Dorsolateral prefrontal cortex (tissue), 120 donors: ENCODE measurements at regions of chr14 and their contacts with region 1.

Region 1: DNA sequence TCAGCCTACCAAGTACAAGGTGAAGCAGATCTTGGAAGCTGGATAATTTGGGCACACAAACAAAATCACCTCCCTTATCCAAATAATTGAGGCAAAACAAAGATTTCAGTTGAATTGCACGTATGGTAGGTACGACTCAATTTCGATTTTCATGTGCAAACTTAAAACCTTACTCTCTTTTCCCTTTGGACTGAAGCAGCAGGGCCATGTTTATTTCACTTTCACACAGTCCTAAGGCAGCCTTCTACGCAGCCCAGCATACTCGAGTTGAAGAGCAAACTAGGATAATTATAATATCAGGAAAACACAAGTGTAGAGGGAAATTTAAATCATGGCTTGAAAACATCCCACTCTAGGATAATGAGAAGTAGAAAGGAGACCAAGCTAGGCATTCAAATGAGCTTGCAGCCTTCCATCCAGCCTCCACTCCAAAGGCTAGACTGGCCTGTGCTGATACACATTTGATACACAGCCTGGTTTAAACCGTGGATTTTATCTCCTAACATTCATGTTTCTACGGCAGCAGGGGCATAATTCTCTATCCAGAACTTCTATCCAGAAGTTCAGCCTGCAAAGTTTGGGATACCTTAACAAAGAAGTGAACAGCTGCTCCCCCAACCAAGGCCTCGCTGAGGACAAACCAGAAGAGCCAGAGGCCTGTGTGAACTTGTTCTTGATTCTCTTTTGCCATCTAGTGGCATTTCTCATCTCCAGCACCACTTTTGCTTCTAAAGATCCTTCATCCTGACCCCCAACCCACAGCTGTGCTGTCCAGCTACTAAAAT is 2.4 kb upstream of the RNASE7 start:
- DNase-seq: peak in 3 of 10 donors; percentile 24 to 68 (median 56)
- H3K4me3 ChIP-seq: peak overlapping the region in 31 of 59 donors; percentile 0 to 51 (median 25)
- H3K27ac ChIP-seq: peak overlapping the region; percentile 31 to 98 (median 92)
- H3K27me3 ChIP-seq: peaks cover 0 to 6% (median 0%) of the 10 kb centered on the region in 45 donors
- CTCF ChIP-seq: peak; percentile 27 to 92 (median 79)

Region 2: GRCh38 chr14:21024585-21025370 is 15.0 kb before region 1 on chr14 and contains the start of gene NDRG2:
- intact Hi-C with region 1: loop called (anchors 1 kb)
- DNase-seq: peak; percentile 23 to 80 (median 68)
- H3K4me3 ChIP-seq: peak within 1 kb of the TSS; percentile 67 to 95 (median 82)
- H3K27ac ChIP-seq: peak within 1 kb of the TSS; percentile 76 to 100 (median 99)
- H3K27me3 ChIP-seq: peaks cover 0 to 30% (median 0%) of the 10 kb centered on the region in 45 donors
- CTCF ChIP-seq: peak in 7 of 56 donors; percentile 6 to 36 (median 17)
- total RNA-seq, gene NDRG2: 513 to 2,446 (median 961) TPM

Region 3: DNA sequence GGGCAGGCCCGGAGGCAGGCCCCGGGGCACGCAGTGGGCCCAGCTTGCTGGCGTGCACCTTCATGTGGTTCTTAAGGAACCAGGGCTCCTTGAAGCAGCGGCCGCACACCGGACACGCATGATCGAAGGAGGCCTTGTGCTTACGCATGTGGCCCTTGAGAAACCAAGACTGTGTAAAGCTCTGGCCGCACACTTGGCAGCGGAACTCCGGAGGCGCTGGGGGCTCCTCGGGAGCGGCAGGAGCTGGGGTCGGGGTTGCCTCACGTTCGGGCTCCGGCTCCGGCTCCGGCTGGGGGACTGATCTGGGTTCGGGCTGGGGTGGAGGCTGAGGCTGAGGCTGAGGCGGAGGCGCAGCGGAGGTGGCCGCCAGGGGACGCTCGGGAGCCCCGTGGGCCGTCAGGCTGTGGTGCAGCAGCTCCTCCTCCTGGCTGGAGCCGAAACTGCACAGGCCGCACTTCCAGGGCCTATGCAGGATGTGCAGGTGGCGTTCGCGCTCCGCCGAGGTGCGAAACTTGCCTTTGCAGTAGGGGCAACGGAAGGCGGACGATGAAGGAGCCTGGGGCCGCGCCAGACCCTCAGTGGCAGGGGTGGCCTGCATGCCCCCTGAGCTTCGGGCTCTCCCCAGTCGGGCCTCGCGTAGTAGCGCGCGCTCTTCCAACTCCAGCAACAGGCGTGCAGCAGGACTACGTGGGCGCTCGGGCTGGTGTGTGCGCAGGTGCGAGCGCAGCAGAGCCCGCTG is 52.7 kb after region 1 on chr14:
- intact Hi-C with region 1: loop called in 1 of 2 experiments (anchors 2 kb)
- DNase-seq: peak; percentile 65 to 83 (median 75)
- H3K4me3 ChIP-seq: peak overlapping the region in 19 of 59 donors; percentile 0 to 36 (median 17)
- H3K27ac ChIP-seq: peak overlapping the region in 41 of 59 donors; percentile 2 to 81 (median 34)
- H3K27me3 ChIP-seq: no peaks in the 10 kb centered on the region
- CTCF ChIP-seq: peak; percentile 65 to 100 (median 100)

Region 4: GRCh38 chr14:21121106-21121505 is 81.3 kb after region 1 on chr14:
- intact Hi-C with region 1: no loop called
- DNase-seq: no peak
- H3K4me3 ChIP-seq: no peak overlapping the region
- H3K27ac ChIP-seq: no peak overlapping the region
- H3K27me3 ChIP-seq: peaks cover 0 to 14% (median 0%) of the 10 kb centered on the region in 45 donors
- CTCF ChIP-seq: no peak

Region 5: GRCh38 chr14:21168055-21168454 is 128.3 kb after region 1 on chr14:
- intact Hi-C with region 1: no loop called
- DNase-seq: no peak
- H3K4me3 ChIP-seq: no peak overlapping the region
- H3K27ac ChIP-seq: no peak overlapping the region
- H3K27me3 ChIP-seq: peaks cover 0 to 10% (median 0%) of the 10 kb centered on the region in 45 donors
- CTCF ChIP-seq: no peak